ENCODE measurements at regions of chr4 and their contacts with region 1.

Region 1: DNA sequence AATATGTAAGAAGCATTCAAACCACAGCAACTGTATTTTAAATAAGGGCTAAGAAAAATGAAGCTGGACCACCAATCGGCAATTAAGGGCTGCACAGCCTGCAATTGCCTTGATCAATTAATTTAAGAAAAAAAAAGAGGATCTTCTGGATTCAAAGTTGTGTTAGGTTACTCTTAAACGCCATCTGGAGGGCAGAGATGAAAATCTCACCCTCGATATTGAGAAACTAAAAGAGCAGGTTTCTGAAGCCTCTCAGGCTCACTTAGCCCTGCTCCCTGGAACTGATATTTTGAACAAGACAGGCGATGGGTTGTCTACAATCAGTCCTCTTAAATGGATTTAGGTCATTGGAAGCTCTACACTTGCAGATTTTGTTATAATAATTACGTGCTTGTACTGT is 579.4 kb downstream of the GRXCR1 start:
- DNase-seq: no peak

Region 2: DNA sequence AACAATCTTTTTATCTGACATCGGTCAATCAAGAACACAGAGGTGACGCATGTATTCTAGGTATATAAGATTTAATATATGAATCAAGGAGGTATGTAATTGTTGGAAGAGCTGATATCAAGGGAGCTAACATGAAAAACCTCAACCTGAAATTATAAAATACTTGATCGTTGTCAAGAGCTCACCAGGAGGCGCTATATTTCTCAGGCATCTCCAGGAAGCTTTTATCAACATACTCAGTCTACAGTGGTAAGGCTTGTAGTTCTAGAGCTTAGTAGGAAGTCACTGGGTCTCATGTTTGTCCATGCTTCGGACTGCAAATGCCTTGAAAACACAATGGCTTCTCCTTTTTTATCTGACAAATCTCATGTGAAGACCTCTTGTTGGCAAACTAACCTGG is 423.4 kb before region 1 on chr4:
- intact Hi-C with region 1: no loop called
- DNase-seq: no peak

Region 3: GRCh38 chr4:43435303-43435702 is 36.6 kb before region 1 on chr4:
- intact Hi-C with region 1: no loop called
- DNase-seq: no peak

Region 4: DNA sequence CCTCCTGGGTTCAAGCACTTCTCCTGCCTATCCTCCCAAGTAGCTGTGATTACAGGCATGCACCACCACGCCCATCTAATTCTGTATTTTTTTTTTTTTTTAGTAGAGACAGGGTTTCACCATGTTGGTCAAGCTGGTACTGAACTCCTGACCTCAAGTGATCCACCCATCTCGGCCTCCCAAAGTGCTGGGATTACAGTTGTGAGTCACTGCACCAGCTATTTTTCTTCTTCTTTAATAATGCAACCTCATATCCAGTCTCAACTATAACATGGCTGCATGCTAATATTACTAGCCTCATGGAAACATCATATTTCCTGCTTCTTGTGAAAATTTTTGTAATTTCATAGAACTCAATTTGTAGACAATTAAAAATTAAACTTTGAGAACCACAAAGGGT is 270.1 kb after region 1 on chr4:
- intact Hi-C with region 1: no loop called
- DNase-seq: no peak

Region 5: DNA sequence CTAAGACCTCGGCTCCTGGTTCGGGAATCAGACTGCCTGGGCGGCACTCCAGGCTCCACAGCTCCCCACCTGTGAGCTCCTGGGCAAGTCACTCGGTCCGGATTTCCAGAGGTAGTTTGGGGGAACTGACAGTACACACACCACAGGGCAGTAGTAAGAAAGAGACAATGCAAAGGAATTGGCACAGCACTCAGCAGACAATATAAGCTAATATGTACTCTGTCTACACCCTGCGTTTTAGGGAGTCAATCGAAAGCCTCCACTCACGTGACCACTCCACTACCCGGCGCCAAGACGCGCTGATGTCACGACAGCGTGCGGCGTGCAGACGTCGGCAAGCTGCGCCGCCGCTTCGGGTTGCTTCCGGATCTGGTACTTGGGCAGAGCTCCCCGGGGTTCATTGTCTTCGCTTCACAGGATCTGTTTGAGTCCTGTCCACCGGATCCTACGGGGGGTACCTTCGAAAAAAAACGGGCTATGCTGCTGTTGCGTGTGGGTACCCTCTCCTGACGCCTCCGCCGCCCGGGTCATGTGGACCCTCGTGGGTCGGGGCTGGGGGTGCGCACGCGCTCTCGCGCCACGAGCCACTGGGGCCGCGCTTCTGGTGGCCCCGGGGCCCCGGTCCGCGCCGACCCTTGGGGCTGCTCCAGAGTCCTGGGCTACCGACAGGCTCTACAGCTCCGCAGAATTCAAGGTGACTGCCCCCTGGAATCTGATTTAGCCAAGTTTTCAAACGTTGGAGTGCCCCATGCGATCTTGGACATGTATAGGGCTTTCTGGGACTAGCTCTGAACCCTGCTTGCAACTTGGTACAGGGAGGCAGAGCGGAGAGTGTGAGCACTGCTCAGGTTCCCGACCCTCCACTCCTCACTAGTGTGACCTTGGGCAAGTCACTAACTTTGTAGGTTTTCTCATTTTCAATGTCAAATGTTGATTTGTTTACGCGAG is 1206.4 kb after region 1 on chr4 and contains the start of gene GUF1:
- intact Hi-C with region 1: loop called in 1 of 2 experiments (anchors 10 kb)
- DNase-seq: peak; percentile 97
- total RNA-seq, gene GUF1: 12.9 to 19.5 TPM